Ovary (tissue), 10 donors: ENCODE measurements at regions of chr16 and their contacts with region 1.

Region 1: DNA sequence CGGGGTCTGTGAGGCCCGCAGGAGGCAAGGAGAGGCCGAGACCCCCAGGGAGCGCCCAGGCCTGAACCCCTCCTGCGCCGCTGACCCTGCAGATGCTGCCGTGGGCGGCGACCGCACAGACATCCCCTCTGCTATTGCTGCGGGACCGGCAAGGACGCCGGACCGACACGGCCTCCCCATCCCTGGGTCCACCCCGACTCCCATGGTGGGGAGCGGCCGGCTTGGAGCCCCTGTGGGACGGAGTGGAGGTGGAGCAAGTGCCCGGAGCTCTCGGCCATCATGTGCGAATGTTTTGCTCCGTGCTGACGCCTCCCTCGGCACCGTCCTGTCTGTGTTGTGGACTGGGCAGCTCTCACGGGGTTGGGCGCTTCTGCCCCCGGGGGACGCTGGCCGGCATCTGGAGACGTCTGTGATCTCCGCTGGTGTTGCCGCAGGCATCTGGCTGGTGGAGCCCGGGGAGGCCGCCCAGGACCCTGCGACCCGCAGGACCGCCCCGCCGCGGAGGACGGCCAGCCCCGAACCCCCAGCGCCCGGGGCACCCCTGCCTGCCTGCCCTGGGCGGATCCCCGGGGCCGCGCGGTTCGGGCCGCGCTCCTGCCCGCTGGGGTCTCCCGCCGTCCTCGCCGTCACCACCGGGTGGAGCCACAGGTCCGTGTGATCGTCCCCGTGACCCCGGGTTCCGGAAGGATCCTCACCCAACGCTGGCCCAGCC is 12.8 kb upstream of the GNG13 start:
- DNase-seq: peak in 2 of 5 donors; percentile 56 to 69
- H3K4me3 ChIP-seq: no peak overlapping the region
- H3K27ac ChIP-seq: no peak overlapping the region
- H3K4me1 ChIP-seq: peaks cover 4% of the 10 kb centered on the region
- H3K27me3 ChIP-seq: peaks cover 4% of the 10 kb centered on the region
- CTCF ChIP-seq: peak in 2 of 3 donors; percentile 35 to 61
- EP300 ChIP-seq: no peak
- POLR2A ChIP-seq: no peak

Region 2: DNA sequence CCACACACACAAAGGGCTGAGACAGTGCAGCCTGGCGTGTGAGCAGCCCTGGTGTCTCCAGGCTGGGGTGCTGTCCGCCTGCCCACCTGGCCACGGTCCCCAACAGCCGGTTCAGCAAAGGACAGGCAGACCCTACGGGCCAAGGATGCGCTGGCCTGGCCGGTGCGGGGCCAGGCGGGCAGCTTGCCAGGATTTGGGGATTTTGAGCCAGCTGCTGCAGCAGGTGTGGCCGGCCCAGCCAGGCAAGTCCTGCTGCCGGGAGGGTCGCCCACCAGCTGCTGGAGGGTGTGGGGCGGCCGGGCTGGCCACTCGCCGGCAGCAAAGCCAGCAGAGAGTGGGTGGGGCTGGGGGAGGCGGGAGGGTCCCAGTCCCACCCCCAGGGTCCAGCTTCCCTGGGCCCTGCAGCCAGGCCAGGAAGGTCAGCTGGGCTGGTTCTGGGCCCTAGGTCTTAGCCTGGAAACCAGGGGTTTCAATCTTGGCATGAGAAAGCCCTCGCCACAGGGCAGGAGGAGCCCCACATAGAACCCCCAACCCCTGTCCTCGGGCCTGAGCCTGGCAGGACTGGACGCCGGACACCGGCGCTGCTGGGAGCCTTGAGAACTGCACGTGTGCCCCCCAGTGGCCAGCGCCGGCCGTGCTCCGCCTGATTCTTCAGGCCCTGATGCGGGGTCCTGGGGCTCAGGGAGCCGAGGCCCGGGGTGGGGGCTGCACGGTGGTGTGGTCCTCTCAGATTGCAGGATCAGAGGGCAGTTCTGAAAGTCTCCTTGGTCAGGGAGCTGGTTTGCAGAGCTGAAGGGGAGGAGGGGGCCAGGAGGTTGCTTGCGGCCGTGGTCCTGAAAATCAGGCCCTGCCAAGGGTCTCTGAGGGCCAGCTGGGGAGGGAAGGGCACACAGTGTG is 241.5 kb after region 1 on chr16:
- intact Hi-C with region 1: loop called in 2 of 4 experiments (anchors 10 kb)
- DNase-seq: peak in 3 of 5 donors; percentile 39 to 67 (median 58)
- H3K4me3 ChIP-seq: no peak overlapping the region
- H3K27ac ChIP-seq: no peak overlapping the region
- H3K4me1 ChIP-seq: no peaks in the 10 kb centered on the region
- H3K27me3 ChIP-seq: no peaks in the 10 kb centered on the region
- CTCF ChIP-seq: peak; percentile 11 to 46 (median 17)
- EP300 ChIP-seq: no peak
- POLR2A ChIP-seq: no peak

Region 3: GRCh38 chr16:1093284-1094123 is 280.1 kb after region 1 on chr16:
- intact Hi-C with region 1: loop called in 1 of 4 experiments (anchors 10 kb)
- DNase-seq: no peak
- H3K4me3 ChIP-seq: no peak overlapping the region
- H3K27ac ChIP-seq: no peak overlapping the region
- H3K4me1 ChIP-seq: peaks cover 5% of the 10 kb centered on the region
- H3K27me3 ChIP-seq: no peaks in the 10 kb centered on the region
- CTCF ChIP-seq: no peak
- EP300 ChIP-seq: no peak
- POLR2A ChIP-seq: no peak

Region 4: DNA sequence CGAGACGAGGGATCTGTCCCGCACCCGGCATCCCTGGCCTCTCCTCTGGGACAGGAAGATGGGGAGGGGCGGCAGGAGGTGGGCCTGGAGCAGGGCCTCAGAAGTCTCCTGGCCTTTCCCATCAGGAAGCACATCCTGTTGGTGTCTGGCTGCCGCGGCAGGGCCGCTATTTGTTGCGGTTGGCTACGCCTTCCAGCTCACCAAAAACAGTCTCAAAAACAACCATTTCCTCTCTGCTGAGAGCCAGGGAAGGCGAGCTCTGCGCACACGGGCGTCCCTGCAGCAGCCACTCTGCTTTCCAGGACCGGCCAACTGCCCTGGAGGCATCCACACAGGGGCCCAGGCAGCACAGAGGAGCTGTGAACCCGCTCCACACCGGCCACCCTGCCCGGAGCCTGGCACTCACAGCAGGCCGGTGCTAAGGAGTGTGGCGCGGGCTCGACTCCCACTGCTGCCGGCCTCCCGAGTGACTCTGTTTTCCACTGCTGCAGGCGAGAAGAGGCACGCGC is 720.1 kb after region 1 on chr16 and contains the start of gene TMEM204:
- intact Hi-C with region 1: loop called in 1 of 4 experiments (anchors 5 kb)
- DNase-seq: peak; percentile 66 to 81 (median 74)
- H3K4me3 ChIP-seq: peak within 1 kb of the TSS; percentile 41
- H3K27ac ChIP-seq: peak within 1 kb of the TSS; percentile 54 to 85
- H3K4me1 ChIP-seq: peaks cover 17% of the 10 kb centered on the region
- H3K27me3 ChIP-seq: no peaks in the 10 kb centered on the region
- CTCF ChIP-seq: no peak
- EP300 ChIP-seq: no peak
- POLR2A ChIP-seq: no peak
- total RNA-seq, gene TMEM204: 9.2 to 23.7 (median 13.8) TPM